ENCODE measurements at regions of chr4 and their contacts with region 1.

Region 1: DNA sequence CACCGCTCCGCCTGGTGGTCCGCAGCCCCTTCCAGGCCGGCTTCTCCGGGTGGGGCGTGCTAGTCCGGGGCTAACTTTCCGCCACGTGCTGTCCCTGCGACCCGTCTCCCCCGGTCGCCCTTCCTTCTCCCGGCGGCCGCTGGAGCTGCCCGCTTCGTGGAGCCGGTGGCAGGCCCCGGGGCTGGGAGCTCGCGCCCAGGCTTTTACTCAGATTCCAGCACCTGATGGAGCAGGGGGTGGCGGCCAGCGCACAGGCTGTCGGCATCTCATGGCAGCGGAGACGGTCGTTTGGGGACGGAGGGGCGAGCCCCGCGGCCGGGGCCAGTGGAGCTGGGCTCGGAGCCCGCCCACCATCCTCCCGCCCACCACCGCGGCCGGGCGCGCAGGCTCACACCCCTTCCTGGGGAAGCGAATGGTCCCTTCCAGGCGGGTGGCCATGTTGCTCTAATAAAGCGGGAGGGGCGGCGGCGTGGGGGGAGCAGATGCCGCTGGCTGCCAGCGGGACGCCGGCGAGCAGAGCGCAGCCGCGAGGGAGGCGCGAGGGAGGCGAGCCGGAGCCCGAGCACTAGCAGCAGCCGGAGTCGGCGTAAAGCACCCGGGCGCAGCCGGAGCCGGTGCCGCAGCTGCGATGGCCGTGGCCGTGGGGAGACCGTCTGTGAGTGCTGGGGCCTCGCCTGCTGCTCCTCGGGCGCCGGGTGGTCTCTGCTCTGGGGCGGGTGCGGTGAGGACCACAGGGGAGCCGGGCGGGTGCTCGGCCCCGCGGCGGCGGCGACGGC is at the start of gene SEPTIN11:
- DNase-seq: peak; percentile 80
- ATAC-seq: peak; percentile 81
- H3K4me3 ChIP-seq: peak within 1 kb of the TSS; percentile 85 to 88
- H3K27ac ChIP-seq: peak within 1 kb of the TSS; percentile 89
- H3K4me1 ChIP-seq: peaks cover 15 to 22% of the 10 kb centered on the region in 2 experiments; a peak in 3 of 4 replicates
- H3K27me3 ChIP-seq: no peaks in the 10 kb centered on the region
- CTCF ChIP-seq: no peak
- POLR2A ChIP-seq: peak; percentile 81
- RAD21 ChIP-seq: no peak
- total RNA-seq, gene SEPTIN11: 94.4 TPM

Region 2: GRCh38 chr4:76781698-76782595 is 167.5 kb before region 1 on chr4:
- CTCF ChIA-PET with region 1: no interaction called
- POLR2A ChIA-PET with region 1: no interaction called
- RAD21 ChIA-PET with region 1: no interaction called
- intact Hi-C with region 1: loop called (anchors 10 kb)
- DNase-seq: peak; percentile 80
- ATAC-seq: peak; percentile 82
- H3K4me3 ChIP-seq: peak overlapping the region in 1 of 2 experiments; percentile 26; a peak in 2 of 4 replicates
- H3K27ac ChIP-seq: peak overlapping the region; percentile 86
- H3K4me1 ChIP-seq: peaks cover 45 to 48% of the 10 kb centered on the region in 2 experiments
- H3K27me3 ChIP-seq: no peaks in the 10 kb centered on the region
- CTCF ChIP-seq: no peak
- POLR2A ChIP-seq: no peak
- RAD21 ChIP-seq: no peak; the same call in none of the 2 replicates

Region 3: DNA sequence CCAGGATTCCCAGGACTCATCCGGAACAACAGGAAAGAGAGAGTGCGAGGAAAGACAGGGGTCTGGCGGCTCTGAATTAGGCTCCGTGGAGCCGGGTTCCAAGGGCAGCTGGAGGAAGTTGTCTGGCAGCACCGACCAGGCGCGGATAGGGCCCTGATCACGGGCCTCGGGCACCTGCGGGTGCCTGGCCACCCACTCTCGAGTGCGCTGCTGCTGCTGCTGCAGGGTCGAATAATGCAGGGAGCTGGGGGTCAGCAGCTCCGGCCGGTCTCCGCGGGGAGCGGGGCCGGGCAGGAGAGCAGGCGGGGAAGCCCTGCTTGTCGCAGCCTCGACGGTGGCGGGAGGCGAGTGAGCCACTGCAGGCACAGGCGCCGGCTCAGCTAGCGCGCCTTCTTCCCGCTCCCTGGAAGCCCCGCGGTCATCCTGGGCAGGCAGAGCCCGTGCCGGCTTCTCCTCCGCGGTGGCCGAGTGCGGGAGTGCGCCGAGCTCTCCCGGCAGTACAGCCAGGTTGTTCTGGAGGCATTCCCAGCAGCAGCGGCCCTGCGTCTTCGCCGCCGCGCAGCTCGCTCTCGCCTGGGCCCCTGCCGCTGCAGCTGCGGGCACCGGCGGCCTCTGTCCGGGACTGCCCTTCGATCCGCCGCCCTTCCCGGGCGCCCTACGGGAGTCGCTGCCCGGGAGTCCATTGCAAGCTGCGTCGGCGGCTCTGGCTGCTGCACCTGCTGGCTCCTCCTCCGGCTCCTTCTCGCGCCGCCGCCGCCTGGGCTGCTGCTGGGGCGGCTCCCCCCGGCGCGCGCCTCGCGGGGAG is 52.5 kb before region 1 on chr4:
- CTCF ChIA-PET with region 1: no interaction called
- POLR2A ChIA-PET with region 1: no interaction called
- RAD21 ChIA-PET with region 1: no interaction called
- intact Hi-C with region 1: loop called (anchors 5 kb)
- DNase-seq: no peak
- ATAC-seq: peak; percentile 63
- H3K4me3 ChIP-seq: peak overlapping the region; percentile 63 to 75
- H3K27ac ChIP-seq: peak overlapping the region; percentile 69; the same call in 1 of the 2 replicates
- H3K4me1 ChIP-seq: peaks cover 3 to 15% of the 10 kb centered on the region in 2 experiments; a peak in 2 of 4 replicates
- H3K27me3 ChIP-seq: no peaks in the 10 kb centered on the region
- CTCF ChIP-seq: no peak
- POLR2A ChIP-seq: no peak
- RAD21 ChIP-seq: no peak